ENCODE measurements at regions of chr5 and their contacts with region 1.

Region 1: GRCh38 chr5:135508482-135509005 is 27.2 kb downstream of the NEUROG1 start:
- DNase-seq: no peak
- H3K4me3 Mint-ChIP-seq: no peak overlapping the region
- H3K27ac Mint-ChIP-seq: no peak overlapping the region
- H3K4me1 Mint-ChIP-seq: no peaks in the 10 kb centered on the region
- H3K27me3 Mint-ChIP-seq: peaks cover 67% of the 10 kb centered on the region

Region 2: GRCh38 chr5:135551593-135552447 is 43.3 kb after region 1 on chr5:
- CTCF ChIA-PET with region 1: interaction called, 10 read pairs
- DNase-seq: peak; percentile 78
- H3K4me3 Mint-ChIP-seq: no peak overlapping the region
- H3K27ac Mint-ChIP-seq: no peak overlapping the region
- H3K4me1 Mint-ChIP-seq: no peaks in the 10 kb centered on the region
- H3K27me3 Mint-ChIP-seq: peaks cover 80% of the 10 kb centered on the region

Measured in activated naive CD4-positive, alpha-beta T cell treated with anti-CD3 and anti-CD28 coated beads, Interleukin-2, amount 10 ng/mL, durations not matched to agents 7 days and 5 days (primary cell).